ENCODE measurements at regions of chr13 and their contacts with region 1.

Region 1: GRCh38 chr13:60707878-60708277 is 310.9 kb downstream of the TDRD3 start:
- DNase-seq: no peak
- ATAC-seq: no peak
- H3K4me3 ChIP-seq: no peak overlapping the region
- H3K27ac ChIP-seq: no peak overlapping the region
- H3K4me1 ChIP-seq: no peaks in the 10 kb centered on the region
- H3K27me3 ChIP-seq: no peaks in the 10 kb centered on the region
- CTCF ChIP-seq: no peak

Region 2: DNA sequence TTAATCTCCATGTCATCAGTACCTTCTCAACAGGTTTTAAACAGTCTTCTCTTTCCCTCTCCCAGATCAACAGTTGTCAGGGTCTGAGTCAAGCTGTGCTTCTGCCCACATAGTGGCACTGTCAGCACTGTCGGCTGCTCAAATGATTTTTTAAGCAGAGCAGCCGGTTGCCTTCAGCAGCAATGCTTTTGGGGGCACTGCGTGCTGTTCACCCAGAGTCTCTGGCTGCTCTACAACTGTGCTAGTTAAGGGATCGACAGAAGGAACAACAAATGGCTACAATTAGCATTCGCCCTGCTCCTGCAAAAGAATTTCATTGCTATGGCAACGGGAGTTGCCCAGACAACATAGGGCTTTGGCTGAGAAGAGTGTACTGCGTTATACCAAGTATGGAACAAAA is 957.0 kb before region 1 on chr13:
- CTCF ChIA-PET with region 1: no interaction called
- POLR2A ChIA-PET with region 1: interaction called, 14 read pairs
- in situ Hi-C with region 1: no loop called
- intact Hi-C with region 1: no loop called
- DNase-seq: no peak
- ATAC-seq: no peak
- H3K4me3 ChIP-seq: no peak overlapping the region
- H3K27ac ChIP-seq: no peak overlapping the region
- H3K4me1 ChIP-seq: no peaks in the 10 kb centered on the region
- H3K27me3 ChIP-seq: no peaks in the 10 kb centered on the region
- CTCF ChIP-seq: no peak

Region 3: DNA sequence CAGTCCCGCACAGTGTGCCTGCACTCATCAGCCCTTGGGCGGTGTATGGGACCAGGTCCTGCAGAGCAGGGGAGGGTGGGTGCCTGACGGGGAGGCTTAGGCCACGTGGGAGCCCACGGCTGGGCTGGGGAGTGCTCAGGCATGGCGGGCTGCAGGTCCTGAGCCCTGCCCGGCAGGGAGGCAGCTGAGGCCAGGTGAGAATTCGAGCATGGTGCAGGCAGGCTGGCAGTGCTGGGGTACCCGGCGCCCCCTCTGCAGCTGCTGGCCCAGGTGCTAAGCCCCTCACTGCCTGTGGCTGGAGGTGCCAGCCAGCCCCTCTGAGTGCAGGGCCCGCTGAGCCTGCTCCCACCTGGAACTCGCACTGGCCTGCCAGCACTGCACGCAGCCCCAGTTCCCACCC is 1338.6 kb after region 1 on chr13:
- CTCF ChIA-PET with region 1: no interaction called
- POLR2A ChIA-PET with region 1: no interaction called
- in situ Hi-C with region 1: no loop called
- intact Hi-C with region 1: no loop called
- DNase-seq: no peak
- ATAC-seq: no peak
- H3K4me3 ChIP-seq: no peak overlapping the region
- H3K27ac ChIP-seq: no peak overlapping the region
- H3K4me1 ChIP-seq: no peaks in the 10 kb centered on the region
- H3K27me3 ChIP-seq: no peaks in the 10 kb centered on the region
- CTCF ChIP-seq: no peak